Left cardiac atrium (tissue), 4 donors: ENCODE measurements at regions of chr2 and their contacts with region 1.

Region 1: DNA sequence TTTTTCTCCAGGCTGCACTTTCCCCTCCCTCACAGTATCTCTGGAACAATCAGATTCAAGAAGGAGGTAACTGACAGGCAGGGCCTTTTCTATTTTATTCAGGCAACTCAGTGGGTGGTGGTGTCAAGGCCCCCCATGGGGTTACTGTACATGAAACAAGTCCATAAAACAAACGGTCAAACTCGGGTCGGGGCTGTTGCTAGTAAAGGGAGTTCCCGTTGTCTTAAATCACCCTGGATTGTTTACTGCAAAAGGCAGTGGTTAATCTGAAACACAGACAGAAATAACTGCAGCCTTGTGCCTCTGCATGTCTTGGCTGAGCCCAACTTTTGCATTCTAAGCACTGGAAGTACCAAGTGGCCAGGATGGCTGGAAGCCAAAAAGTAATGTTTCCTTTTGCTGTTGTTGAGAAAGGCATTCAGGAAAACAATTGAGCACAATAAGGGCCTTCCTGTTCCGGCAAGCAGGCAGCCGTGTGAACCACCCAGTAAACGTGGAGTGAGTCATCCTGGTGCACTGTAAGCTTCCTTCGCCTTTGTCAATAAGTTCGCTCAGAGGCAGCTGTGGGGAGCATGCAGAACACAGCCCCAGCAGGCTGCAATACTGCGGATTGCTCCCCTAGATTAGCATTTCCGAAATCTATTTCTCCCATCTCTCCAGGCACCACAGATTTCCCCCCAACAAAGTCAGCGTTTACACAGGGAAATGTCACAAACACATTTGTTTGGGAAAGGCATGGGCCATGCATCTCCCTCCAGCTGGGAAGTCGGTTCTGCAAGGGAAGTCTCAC is 149.6 kb downstream of the IRS1 start:
- DNase-seq: peak; percentile 76
- ATAC-seq: peak; percentile 90 to 93

Region 2: GRCh38 chr2:226699321-226699720 is 49.3 kb after region 1 on chr2:
- intact Hi-C with region 1: loop called in 1 of 2 experiments (anchors 5 kb)
- DNase-seq: peak; percentile 80
- ATAC-seq: peak; percentile 94 to 97

Region 3: DNA sequence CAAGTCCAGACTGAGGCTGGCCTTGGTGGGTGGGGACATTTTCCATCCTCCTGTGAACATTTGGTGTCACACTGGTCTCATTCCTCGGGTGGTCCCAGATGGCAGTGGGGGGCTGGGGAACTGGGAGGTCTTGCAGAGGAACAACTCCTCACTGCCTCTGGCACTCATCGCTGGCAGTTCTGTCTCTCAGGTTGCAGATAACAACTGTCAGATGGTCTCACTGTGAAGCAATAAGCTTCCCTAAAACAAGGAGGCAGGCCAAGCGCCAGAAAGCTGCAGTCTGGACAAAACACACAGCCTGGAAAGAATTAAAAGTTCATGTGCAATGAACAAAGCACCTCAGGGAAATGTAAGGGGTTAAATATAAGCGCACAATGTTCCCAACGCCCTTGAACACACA is 71.5 kb after region 1 on chr2:
- intact Hi-C with region 1: loop called in 1 of 2 experiments (anchors 10 kb)
- DNase-seq: peak; percentile 54
- ATAC-seq: no peak